ENCODE measurements at regions of chr11 and their contacts with region 1.

Region 1: DNA sequence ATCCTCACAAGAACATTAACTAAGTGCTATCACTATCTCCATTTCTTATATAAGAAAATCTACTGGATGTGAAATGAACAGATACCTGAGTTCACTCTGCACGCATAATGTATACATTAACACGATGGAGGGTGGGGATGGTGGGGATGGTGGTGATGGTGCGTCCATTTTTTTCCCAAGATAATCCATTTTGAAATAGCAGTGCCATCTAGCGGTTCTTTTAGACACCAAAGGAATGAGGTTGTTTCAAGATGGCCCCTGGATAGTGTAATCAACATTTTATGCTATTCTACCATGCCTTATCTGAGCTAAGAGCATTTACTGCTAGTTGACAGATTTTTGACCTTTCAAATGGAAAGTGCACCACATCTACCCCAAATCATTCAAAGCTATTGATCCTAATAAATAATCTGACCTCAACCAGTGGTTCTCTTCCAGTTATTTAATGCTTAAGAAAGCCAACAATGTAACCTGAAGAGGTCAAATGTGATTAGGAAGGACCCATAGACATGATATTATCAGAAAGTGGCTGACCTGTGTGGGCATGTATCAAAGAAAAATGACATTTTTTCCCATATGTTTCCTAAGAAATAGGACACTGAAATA is 714.7 kb upstream of the TENM4 start:
- DNase-seq: peak; percentile 76
- H3K4me3 ChIP-seq: no peak overlapping the region
- H3K27ac ChIP-seq: no peak overlapping the region
- H3K4me1 ChIP-seq: no peaks in the 10 kb centered on the region
- H3K27me3 ChIP-seq: no peaks in the 10 kb centered on the region
- CTCF ChIP-seq: peak; percentile 77

Region 2: GRCh38 chr11:79400717-79401686 is 754.5 kb before region 1 on chr11:
- CTCF ChIA-PET with region 1: no interaction called
- POLR2A ChIA-PET with region 1: no interaction called
- intact Hi-C with region 1: loop called (anchors 5 kb)
- DNase-seq: peak; percentile 36
- H3K4me3 ChIP-seq: no peak overlapping the region
- H3K27ac ChIP-seq: no peak overlapping the region
- H3K4me1 ChIP-seq: no peaks in the 10 kb centered on the region
- H3K27me3 ChIP-seq: no peaks in the 10 kb centered on the region
- CTCF ChIP-seq: peak; percentile 69

Region 3: DNA sequence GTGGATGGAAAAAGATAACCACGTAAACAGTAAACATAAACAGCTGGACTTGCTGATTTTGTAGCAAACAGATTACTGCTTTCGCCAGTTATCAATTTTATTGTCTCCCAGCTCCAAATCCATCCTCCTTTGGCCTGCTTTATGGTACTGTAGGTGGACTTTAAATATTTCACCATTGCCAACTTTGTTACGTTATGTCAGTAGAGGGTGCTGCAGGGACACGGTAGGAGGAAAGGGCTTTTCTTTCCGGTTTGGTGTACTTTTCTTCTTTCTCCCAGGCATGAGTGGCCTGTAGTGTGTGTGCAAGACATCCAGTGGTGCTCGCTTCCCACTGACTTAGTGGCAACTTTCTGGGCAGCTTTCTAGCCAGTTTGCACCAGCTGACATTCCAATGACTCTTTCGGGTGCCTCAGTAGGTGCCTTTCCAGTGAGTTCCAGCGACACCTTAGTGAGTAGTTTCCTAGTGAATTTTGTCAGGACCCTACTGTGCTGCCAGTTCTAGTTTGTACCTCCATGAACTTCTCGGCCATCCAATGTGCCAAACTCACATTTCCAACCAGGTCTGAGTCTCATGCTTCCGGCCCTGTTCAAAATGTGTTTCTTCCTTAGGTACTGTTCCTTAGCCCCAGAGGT is 447.1 kb before region 1 on chr11:
- CTCF ChIA-PET with region 1: interaction called, 8 read pairs
- POLR2A ChIA-PET with region 1: no interaction called
- intact Hi-C with region 1: loop called (anchors 1 kb)
- DNase-seq: peak; percentile 74
- H3K4me3 ChIP-seq: no peak overlapping the region
- H3K27ac ChIP-seq: no peak overlapping the region
- H3K4me1 ChIP-seq: no peaks in the 10 kb centered on the region
- H3K27me3 ChIP-seq: no peaks in the 10 kb centered on the region
- CTCF ChIP-seq: peak; percentile 64

Region 4: DNA sequence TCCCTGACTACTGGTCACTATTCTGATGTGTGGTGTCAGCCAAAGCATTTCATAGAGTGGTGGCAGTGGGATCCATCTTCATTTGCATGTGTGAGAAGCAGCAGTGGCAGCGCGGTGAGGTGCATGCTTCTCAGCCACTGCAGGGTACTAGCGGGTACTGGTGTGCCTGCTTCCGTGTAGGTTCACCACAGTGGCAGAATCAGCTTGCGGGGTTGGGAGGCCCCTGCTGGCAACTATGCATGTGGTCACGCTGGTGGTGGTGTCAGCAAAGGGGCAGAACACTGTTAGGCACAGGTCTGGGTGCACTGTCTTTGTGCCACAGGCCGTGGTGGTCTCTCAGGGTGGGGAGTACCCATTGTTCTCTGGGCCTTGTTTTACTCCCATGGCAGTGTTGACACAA is 428.3 kb before region 1 on chr11:
- CTCF ChIA-PET with region 1: no interaction called
- POLR2A ChIA-PET with region 1: no interaction called
- intact Hi-C with region 1: no loop called
- DNase-seq: no peak
- H3K4me3 ChIP-seq: no peak overlapping the region
- H3K27ac ChIP-seq: no peak overlapping the region
- H3K4me1 ChIP-seq: no peaks in the 10 kb centered on the region
- H3K27me3 ChIP-seq: no peaks in the 10 kb centered on the region
- CTCF ChIP-seq: no peak

Region 5: GRCh38 chr11:80007616-80008015 is 147.9 kb before region 1 on chr11:
- CTCF ChIA-PET with region 1: no interaction called
- POLR2A ChIA-PET with region 1: no interaction called
- intact Hi-C with region 1: no loop called
- DNase-seq: no peak
- H3K4me3 ChIP-seq: no peak overlapping the region
- H3K27ac ChIP-seq: no peak overlapping the region
- H3K4me1 ChIP-seq: no peaks in the 10 kb centered on the region
- H3K27me3 ChIP-seq: no peaks in the 10 kb centered on the region
- CTCF ChIP-seq: no peak

Region 6: GRCh38 chr11:80118073-80118472 is 37.4 kb before region 1 on chr11:
- CTCF ChIA-PET with region 1: no interaction called
- POLR2A ChIA-PET with region 1: no interaction called
- intact Hi-C with region 1: no loop called
- DNase-seq: no peak
- H3K4me3 ChIP-seq: no peak overlapping the region
- H3K27ac ChIP-seq: no peak overlapping the region
- H3K4me1 ChIP-seq: no peaks in the 10 kb centered on the region
- H3K27me3 ChIP-seq: no peaks in the 10 kb centered on the region
- CTCF ChIP-seq: no peak

Measured in A673 (cell line).